ENCODE measurements at regions of chr15 and their contacts with region 1.

Region 1: GRCh38 chr15:45402162-45402954 is 24.0 kb upstream of the GATM start:
- DNase-seq: peak; percentile 100
- H3K4me3 ChIP-seq: peak overlapping the region; percentile 87
- H3K27ac ChIP-seq: peak overlapping the region; percentile 82
- H3K4me1 ChIP-seq: peaks cover 37% of the 10 kb centered on the region
- CTCF ChIP-seq: no peak

Region 2: DNA sequence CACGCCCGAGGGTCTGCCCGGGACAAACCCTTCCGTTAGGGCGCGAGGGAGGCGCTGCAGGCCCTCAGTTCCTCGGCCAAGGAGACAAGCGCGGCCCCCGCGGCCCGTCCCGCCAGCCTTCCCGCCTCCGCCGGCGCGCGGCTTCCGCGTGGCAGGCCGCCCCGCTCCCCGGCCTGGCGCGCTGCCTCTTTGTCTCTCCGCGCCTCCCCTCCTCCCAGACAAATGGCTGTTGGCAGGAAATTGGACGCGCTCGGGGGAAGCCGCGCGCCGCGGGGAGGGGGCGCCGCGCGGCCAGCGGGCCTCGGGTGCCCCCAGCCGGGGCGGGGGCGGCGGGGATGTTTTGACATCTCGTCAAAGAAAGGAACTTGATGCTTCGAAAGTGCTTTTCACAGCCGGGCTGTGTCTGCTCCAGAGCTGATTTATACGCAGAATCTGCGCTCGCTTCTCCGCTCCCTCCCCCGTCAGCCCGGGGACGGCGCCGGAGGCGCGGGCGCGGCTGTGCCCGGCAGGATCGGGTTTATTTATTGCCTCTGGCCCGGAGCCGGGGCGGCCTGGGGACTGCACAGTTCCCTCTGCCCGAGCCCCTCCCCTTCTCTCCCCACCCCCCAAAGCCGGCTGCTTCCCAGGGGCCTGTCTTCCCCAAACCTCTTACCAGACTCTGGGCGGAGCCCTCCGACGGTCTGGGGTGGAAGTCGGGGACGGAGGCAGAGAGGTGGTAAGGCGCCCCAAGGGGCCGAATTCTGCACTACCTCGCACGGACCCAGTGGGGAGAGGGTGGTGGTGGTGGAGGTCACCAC is 235.3 kb before region 1 on chr15:
- CTCF ChIA-PET with region 1: interaction called, 5 read pairs
- POLR2A ChIA-PET with region 1: interaction called, 6 read pairs
- intact Hi-C with region 1: loop called (anchors 1 kb)
- DNase-seq: peak; percentile 91
- H3K4me3 ChIP-seq: peak overlapping the region; percentile 73
- H3K27ac ChIP-seq: peak overlapping the region; percentile 80
- H3K4me1 ChIP-seq: peaks cover 39% of the 10 kb centered on the region
- CTCF ChIP-seq: peak; percentile 78

Region 3: GRCh38 chr15:45279024-45279698 is 123.2 kb before region 1 on chr15:
- CTCF ChIA-PET with region 1: interaction called, 4 read pairs
- POLR2A ChIA-PET with region 1: interaction called, 4 read pairs
- intact Hi-C with region 1: loop called (anchors 2 kb)
- DNase-seq: peak; percentile 97
- H3K4me3 ChIP-seq: peak overlapping the region; percentile 78
- H3K27ac ChIP-seq: peak overlapping the region; percentile 18
- H3K4me1 ChIP-seq: peaks cover 13% of the 10 kb centered on the region
- CTCF ChIP-seq: no peak

Region 4: DNA sequence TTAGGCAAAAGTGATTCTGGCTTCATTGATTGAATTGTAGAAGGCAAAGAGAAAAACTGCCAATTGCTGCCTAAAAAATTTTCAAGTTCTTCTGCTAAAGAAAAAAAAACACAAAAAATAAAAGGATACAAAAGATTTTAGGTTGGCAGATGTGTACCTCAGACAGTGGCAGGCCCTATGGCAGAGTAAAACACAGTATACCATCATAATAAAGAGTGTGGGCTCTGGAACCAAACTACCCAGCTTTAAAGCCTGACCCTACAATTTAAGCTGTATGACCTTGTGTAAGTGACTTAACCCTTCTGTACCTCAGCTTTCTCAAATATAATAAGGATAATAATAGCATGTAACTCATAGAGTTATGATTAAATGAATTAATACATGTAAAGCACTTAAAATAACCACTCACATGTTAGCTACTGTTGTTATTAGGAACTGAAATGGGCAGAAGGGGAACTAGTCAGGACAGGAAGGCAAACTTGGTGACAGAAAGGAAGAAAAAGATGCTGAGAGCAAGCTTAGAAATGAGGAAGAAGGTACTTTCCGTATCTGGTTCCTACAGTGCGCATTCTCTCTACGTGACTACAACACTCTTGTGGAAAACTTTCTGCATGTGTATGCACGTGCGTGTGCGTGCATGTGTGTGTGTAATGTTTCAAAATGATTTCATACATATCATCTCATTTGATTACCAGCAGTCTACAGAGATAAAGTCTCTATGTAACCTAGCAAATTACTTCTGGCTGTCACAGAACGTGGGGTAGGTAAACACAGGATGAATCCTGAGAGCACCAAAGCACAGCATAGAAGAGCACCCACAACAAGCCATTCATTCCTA is 10.4 kb before region 1 on chr15:
- CTCF ChIA-PET with region 1: no interaction called
- POLR2A ChIA-PET with region 1: interaction called, 22 read pairs
- intact Hi-C with region 1: no loop called
- DNase-seq: peak; percentile 78
- H3K4me3 ChIP-seq: peak overlapping the region; percentile 43
- H3K27ac ChIP-seq: peak overlapping the region; percentile 14
- H3K4me1 ChIP-seq: peaks cover 17% of the 10 kb centered on the region
- CTCF ChIP-seq: no peak

Region 5: GRCh38 chr15:45587095-45587860 is 184.9 kb after region 1 on chr15 and contains the start of gene BLOC1S6:
- CTCF ChIA-PET with region 1: interaction called, 3 read pairs
- POLR2A ChIA-PET with region 1: interaction called, 8 read pairs
- intact Hi-C with region 1: loop called (anchors 1 kb)
- DNase-seq: peak; percentile 93
- H3K4me3 ChIP-seq: peak within 1 kb of the TSS; percentile 96
- H3K27ac ChIP-seq: peak within 1 kb of the TSS; percentile 78
- H3K4me1 ChIP-seq: peaks cover 44% of the 10 kb centered on the region
- CTCF ChIP-seq: no peak
- total RNA-seq, gene BLOC1S6: 50.2 and 74.7 TPM in 2 replicates

Measured in OCI-LY7 (cell line).